Tibial artery (tissue), 4 donors: ENCODE measurements at regions of chr16 and their contacts with region 1.

Region 1: GRCh38 chr16:50548125-50548908 is at the start of gene NKD1:
- DNase-seq: peak; percentile 71 to 89
- H3K4me3 ChIP-seq: peak within 1 kb of the TSS; percentile 89 to 99
- H3K27ac ChIP-seq: peak within 1 kb of the TSS; percentile 87 to 89
- H3K4me1 ChIP-seq: peaks cover 0 to 41% (median 21%) of the 10 kb centered on the region in 4 donors
- H3K27me3 ChIP-seq: no peaks in the 10 kb centered on the region
- CTCF ChIP-seq: no peak

Region 2: DNA sequence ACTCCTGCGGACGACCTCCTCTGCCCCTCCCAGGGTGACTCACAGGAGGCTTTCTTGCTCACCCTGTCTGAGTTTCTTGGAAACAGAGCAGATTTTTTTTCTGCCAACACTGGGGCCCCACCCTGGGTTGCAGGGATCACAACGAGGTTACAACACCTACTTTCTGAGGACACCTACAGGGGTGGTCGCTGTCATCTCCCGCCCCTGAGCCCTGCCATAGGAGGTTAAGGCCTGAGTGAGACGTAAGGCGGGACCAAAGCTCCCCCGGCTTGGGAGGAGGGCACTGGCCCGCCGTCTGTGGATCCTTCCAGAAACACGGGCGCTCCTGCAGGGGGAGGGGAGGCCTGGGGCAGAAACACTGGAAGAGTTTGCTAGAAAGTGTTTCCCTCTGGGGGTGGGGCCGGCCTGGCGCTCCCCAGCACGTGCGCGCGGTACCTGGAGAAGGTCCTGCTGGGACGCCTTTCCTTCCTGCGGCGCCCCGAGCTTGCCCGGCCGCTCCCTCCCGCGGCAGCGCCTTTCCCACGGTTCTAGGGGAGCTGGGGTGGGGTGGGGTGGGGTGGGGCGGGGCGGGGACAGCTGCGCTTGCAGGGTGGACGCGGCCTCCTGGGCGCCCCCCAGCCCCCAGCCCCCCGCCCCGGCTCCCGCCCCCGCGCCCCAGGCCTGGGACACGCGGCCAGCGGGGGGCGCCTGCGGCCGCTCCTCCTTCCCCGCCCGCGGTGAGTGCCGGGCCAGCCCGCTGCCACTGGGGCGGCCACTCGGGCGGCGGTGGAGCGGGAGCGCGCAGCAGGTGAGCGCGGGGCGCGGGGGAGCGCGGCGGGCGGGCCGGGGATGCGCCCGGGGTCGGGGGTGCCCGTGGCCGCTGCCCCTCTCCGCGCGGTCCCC is 302.7 kb before region 1 on chr16:
- intact Hi-C with region 1: loop called (anchors 10 kb)
- DNase-seq: peak; percentile 63 to 77
- H3K4me3 ChIP-seq: peak overlapping the region; percentile 61 to 76
- H3K27ac ChIP-seq: peak overlapping the region; percentile 65
- H3K4me1 ChIP-seq: peaks cover 0 to 21% (median 18%) of the 10 kb centered on the region in 4 donors
- H3K27me3 ChIP-seq: no peaks in the 10 kb centered on the region
- CTCF ChIP-seq: peak in 1 of 2 experiments; percentile 10

Region 3: DNA sequence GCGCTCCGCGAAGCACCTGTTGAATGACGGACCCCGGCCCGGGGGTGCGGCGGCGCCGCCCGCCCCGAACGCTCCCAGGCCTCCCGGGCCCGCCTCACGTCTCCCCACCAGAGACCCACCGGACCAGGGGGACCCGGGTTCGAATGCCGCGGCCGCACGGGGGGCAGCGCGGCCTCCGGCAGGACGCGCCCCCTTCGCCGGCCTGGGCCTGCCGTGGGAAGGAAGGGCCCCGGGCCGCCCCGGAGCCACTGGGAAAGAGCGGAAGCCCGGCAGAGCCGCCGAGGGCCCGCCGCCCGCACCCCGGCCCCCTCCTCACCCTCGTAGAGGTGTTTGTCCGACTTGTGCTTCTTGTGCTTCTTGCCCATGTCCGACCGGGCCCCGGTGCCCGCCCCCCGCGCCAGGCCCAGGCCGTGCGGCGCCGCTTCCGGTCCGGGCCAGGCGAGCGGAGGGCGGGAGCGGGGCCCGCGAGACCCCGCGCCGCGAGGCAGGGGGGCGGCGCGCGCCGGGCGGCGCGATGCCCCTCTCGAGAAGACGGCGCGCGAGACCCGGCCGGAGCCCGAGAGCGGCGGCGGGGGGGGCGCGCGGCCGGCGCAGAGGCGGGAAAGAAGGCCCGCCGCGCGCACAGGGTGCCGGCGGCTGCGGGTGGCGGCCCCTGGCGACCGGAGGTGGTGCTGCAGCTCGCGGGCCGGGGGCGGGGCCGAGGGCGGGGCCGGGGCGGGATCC is 179.7 kb before region 1 on chr16 and contains the start of gene BRD7:
- intact Hi-C with region 1: loop called (anchors 5 kb)
- DNase-seq: peak; percentile 33 to 85
- H3K4me3 ChIP-seq: peak within 1 kb of the TSS; percentile 87 to 97
- H3K27ac ChIP-seq: peak within 1 kb of the TSS; percentile 77 to 87
- H3K4me1 ChIP-seq: peaks cover 0 to 70% (median 44%) of the 10 kb centered on the region in 4 donors
- H3K27me3 ChIP-seq: no peaks in the 10 kb centered on the region
- CTCF ChIP-seq: peak; percentile 40 to 73

Region 4: DNA sequence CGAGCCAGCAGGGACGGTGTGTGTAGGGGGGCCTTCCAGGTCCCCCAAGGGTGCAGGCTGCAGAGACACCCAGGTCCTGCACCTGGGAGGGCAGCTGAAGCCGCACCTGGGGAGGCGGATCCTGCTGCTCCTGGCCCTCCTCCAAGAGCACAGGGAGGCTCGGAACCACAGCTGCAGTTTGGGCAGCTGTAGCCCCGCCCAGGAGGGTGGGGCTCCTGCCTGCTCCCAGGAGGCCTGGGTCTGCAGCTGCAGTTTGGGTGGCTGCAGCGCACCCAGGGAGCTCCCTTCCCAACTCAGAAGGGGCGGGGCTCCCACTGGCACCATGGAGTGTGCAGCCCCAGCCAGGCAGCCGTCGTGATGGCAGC is 69.6 kb before region 1 on chr16:
- intact Hi-C with region 1: no loop called
- DNase-seq: no peak
- H3K4me3 ChIP-seq: no peak overlapping the region
- H3K27ac ChIP-seq: no peak overlapping the region
- H3K4me1 ChIP-seq: peaks cover 0 to 11% (median 4%) of the 10 kb centered on the region in 4 donors
- H3K27me3 ChIP-seq: no peaks in the 10 kb centered on the region
- CTCF ChIP-seq: no peak

Region 5: DNA sequence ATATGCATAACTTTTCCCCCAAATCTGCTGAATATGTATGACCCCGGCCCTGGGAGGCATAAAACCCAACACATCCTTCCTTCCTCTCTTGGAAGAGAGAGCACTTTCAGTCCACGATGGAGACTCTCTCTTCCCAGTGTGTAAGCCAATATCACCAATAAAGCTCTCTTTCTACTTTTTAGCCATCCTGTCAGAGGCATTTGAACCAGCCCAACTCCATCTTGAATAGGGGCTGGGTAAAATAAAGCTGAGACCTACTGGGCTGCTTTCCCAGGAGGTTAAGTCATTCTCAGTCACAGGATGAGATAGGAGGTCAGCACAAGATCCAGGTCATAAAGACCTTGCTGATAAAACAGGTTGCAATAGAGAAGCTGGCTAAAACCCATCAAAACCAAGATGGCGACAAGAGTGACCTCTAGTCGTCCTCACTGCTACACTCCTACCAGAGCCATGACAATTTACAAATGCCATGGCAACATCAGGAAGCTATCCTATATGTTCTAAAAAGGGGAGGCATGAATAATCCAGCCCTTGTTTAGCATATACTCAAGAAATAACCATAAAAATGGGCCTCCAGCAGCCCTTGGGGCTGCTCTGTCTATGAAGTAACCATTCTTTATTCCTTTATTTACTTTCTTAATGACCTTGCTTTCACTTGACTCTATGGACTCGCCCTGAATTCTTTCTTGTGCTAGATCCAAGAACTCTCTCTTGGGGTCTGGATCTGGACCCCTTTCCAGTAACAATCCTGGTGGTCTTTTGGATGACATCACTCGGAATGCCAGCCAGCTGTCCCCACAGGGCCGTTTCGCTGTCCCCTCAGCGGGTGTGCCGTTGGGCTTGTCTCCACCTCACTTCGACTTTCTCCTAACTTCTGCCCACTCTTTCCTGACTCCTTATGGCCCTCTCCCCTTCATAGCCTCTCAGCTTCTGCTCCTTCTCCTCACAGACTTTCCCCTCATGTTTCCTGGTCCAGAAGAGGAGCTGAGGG is 53.5 kb before region 1 on chr16:
- intact Hi-C with region 1: loop called (anchors 2 kb)
- DNase-seq: no peak
- H3K4me3 ChIP-seq: no peak overlapping the region
- H3K27ac ChIP-seq: no peak overlapping the region
- H3K4me1 ChIP-seq: peaks cover 0 to 32% (median 21%) of the 10 kb centered on the region in 4 donors
- H3K27me3 ChIP-seq: no peaks in the 10 kb centered on the region
- CTCF ChIP-seq: no peak

Region 6: DNA sequence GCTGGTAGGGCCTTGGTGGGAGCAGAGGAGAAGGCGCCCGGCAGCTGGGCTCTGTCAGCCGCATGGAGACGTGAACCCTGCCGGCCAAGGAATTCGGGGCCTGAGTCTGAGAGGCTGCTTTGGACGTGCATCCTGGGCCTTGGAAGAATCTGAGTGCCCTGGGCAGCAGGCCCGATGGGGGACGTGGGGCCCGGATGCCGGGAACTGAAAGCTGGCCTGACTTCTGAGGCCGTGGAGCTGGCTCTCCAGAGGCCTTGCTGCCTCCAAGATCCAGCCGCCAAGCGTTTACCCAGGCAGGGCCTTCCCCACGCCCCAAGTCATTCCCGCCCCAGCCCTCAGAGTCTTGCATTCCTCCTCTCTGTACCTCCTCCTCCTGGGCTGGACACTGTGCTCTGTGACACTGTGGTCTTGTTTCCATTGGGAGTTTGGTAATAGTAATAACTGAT is 37.0 kb after region 1 on chr16:
- intact Hi-C with region 1: loop called (anchors 5 kb)
- DNase-seq: peak; percentile 76 to 97
- H3K4me3 ChIP-seq: no peak overlapping the region
- H3K27ac ChIP-seq: peak overlapping the region; percentile 66 to 92
- H3K4me1 ChIP-seq: peaks cover 8 to 64% (median 51%) of the 10 kb centered on the region in 4 donors
- H3K27me3 ChIP-seq: no peaks in the 10 kb centered on the region
- CTCF ChIP-seq: no peak